ENCODE measurements at regions of chr11 and their contacts with region 1.

Region 1: GRCh38 chr11:76670485-76671236 is at the start of gene LRRC32:
- DNase-seq: peak; percentile 79 to 84
- ATAC-seq: peak; percentile 54 to 78 (median 70)
- H3K4me3 ChIP-seq: peak within 1 kb of the TSS; percentile 47 to 87 (median 74)
- H3K27ac ChIP-seq: peak within 1 kb of the TSS; percentile 83 to 96 (median 90)
- H3K4me1 ChIP-seq: peaks cover 18 to 80% (median 55%) of the 10 kb centered on the region in 9 donors
- H3K27me3 ChIP-seq: peaks cover 0 to 36% (median 0%) of the 10 kb centered on the region in 7 donors
- CTCF ChIP-seq: peak in 4 of 9 donors; percentile 7 to 25 (median 8)
- total RNA-seq, gene LRRC32: 16.7 to 61.3 (median 31.5) TPM

Region 2: GRCh38 chr11:76579056-76579751 is 91.5 kb before region 1 on chr11:
- intact Hi-C with region 1: loop called in 2 of 10 experiments (anchors 1 to 2 kb)
- DNase-seq: peak; percentile 75 to 81
- ATAC-seq: peak; percentile 59 to 81 (median 74)
- H3K4me3 ChIP-seq: peak overlapping the region in 3 of 10 donors; percentile 16 to 28 (median 28)
- H3K27ac ChIP-seq: peak overlapping the region; percentile 64 to 94 (median 86)
- H3K4me1 ChIP-seq: peaks cover 13 to 44% (median 38%) of the 10 kb centered on the region in 9 donors
- H3K27me3 ChIP-seq: no peaks in the 10 kb centered on the region
- CTCF ChIP-seq: peak in 8 of 9 donors; percentile 19 to 68 (median 50)

Region 3: DNA sequence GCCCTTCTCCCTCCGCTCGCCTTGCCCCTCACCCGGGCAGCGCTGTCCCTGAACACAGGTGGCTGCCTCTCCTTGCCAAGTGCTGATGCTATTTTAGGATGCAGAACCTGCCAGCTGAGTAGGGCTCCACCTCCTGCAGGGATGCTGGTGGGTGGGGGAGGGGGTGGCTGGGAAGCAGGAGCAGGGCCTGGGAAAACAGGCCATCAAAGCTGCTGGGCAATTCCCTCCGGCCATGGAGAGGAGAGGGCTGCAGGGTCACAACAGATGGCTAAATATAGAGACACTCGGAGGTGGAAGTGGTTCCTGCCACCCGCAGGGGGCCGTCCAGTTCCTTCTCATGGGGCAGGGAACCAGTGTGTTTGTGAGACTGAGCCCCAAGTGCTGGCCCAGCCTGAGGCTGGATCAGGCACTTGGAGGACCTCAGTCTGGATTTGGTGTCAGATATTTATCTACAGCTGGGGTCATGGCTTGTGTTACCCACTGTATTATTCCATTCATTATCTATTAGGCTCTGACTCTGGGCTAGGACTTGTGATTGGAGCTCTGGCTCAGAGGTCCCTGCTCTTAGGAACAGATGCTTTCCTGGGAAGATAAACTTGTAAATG is 59.7 kb before region 1 on chr11:
- intact Hi-C with region 1: loop called in 4 of 10 experiments (anchors 5 kb)
- DNase-seq: peak; percentile 58 to 74
- ATAC-seq: peak; percentile 44 to 78 (median 65)
- H3K4me3 ChIP-seq: no peak overlapping the region
- H3K27ac ChIP-seq: peak overlapping the region in 9 of 10 donors; percentile 43 to 78 (median 66)
- H3K4me1 ChIP-seq: peaks cover 28 to 65% (median 45%) of the 10 kb centered on the region in 9 donors
- H3K27me3 ChIP-seq: no peaks in the 10 kb centered on the region
- CTCF ChIP-seq: peak in 6 of 9 donors; percentile 22 to 48 (median 30)

Region 4: DNA sequence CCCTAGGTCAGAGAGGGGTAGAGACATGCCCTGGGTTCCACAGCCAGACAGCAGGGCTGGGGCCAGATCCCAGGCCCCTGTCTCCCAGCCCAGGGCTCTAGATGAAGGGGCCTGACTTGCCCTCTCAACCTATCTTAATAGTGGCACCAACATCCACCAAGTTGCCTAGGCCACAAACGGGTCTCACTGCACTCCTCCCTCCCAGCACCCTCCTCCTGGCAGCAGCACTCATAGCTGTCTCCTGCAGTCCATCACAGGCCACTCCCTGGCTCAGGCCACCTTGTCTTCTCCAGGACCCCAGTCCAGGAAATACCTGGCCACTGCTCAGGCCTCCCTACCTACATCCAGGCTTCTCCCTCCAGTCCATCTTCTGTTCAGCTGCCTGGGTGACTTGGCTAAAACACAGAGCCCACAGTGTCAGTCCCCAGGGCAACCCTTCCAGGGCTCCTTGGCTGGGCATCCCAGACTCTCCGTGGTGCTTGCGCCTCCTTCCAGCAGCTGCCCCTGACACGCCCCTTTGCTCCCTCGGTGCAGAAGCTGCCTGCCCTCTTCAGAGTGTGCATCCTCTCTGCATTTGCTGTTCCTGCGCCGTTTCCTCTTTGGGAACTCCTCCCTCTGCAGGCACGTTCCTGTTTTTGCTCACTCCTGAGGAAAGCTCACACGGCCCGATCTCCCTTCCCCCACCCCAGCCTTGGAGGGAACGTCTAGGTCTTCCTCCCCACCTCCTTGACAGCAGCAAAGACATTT is 40.6 kb before region 1 on chr11:
- intact Hi-C with region 1: loop called in 2 of 10 experiments (anchors 5 kb)
- DNase-seq: peak; percentile 74 to 87
- ATAC-seq: peak; percentile 77 to 91 (median 86)
- H3K4me3 ChIP-seq: peak overlapping the region in 4 of 10 donors; percentile 5 to 18 (median 12)
- H3K27ac ChIP-seq: peak overlapping the region; percentile 64 to 98 (median 92)
- H3K4me1 ChIP-seq: peaks cover 17 to 60% (median 29%) of the 10 kb centered on the region in 9 donors
- H3K27me3 ChIP-seq: no peaks in the 10 kb centered on the region
- CTCF ChIP-seq: peak in 6 of 9 donors; percentile 10 to 50 (median 36)

Region 5: GRCh38 chr11:76704121-76704948 is 33.7 kb after region 1 on chr11:
- intact Hi-C with region 1: no loop called
- DNase-seq: no peak
- ATAC-seq: no peak
- H3K4me3 ChIP-seq: no peak overlapping the region
- H3K27ac ChIP-seq: no peak overlapping the region
- H3K4me1 ChIP-seq: peaks cover 0 to 18% (median 0%) of the 10 kb centered on the region in 9 donors
- H3K27me3 ChIP-seq: no peaks in the 10 kb centered on the region
- CTCF ChIP-seq: no peak

Region 6: DNA sequence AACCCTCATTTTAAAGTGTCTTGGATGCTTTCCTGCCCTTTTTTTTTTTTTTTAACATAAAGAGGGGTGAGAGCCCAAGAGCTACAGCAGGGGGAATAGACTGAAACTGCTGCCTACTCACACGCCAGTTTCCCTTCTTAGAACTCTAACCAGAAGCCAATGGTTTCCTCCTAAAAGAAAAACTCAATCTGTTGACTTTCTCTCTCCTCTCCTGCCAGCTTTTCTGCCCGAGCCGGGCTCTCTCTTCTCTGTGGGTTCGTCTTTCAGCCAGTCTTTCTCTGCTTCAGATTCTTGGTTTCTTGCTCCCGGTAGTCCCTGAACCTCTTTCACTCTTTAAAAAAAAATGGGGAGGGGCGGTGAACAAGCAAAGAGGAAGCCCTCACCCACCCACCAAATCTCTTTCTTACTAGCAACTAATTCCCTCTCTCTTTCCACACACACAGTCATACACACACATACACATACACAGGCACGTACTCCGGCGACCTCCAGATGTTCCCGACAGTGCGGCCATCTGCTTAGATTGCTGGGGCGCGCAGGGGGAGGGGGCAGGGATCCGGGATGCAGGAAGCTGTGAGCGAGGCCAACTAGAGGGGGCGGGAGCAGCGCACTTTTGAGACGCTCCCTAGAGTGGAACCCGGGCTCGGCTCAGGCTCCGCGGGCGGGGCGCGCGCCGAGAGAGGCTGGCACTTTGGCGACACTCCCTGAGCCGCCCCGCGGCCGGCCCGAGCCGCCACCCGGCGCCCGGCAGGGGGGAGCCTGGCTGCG is 112.0 kb after region 1 on chr11:
- intact Hi-C with region 1: no loop called
- DNase-seq: peak; percentile 88 to 90
- ATAC-seq: peak; percentile 69 to 86 (median 80)
- H3K4me3 ChIP-seq: peak overlapping the region; percentile 73 to 96 (median 88)
- H3K27ac ChIP-seq: peak overlapping the region; percentile 75 to 97 (median 90)
- H3K4me1 ChIP-seq: peaks cover 0 to 74% (median 45%) of the 10 kb centered on the region in 9 donors
- H3K27me3 ChIP-seq: peaks cover 0 to 50% (median 0%) of the 10 kb centered on the region in 7 donors
- CTCF ChIP-seq: no peak

Measured in heart right ventricle (tissue), 16 donors.